AG04449 (cell line): ENCODE measurements at regions of chr11 and their contacts with region 1.

Region 1: GRCh38 chr11:17384002-17384511 is 4.4 kb downstream of the KCNJ11 start:
- DNase-seq: peak; percentile 26
- H3K4me3 ChIP-seq: no peak overlapping the region
- CTCF ChIP-seq: peak; percentile 87

Region 2: DNA sequence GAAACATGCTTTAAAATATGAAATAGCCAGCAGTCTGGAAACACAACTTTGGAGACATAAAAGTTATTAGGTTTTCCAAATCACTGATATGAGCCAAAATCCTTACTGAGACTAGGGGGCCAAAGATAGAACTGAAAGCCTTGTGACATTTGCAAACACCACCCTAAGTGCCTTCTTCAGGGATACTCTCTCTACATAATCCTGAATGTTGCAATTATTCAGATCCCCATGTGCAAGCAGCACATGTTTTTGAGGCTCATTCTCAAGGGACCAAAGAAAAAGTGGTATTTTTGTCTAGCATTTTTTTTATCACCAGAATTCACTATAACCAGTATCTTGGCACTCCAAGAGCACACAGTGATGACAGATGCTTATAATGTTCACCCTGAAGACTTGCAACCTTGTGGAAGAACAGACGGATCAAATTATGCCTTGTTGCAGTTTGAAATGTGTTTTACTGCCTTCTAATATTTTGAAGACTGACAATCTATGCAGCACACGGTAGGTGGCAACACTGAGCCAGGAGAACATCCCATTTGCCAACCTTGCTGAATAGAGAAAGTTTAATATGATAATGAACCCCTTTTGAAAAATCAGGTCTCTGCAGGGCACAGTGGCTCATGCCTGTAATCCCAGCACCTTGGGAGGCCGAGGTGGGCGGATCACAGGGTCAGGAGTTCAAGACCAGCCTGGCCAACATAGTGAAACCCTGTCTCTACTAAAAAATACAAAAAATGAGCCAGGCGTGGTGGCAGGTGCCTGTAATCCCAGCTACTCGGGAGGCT is 448.3 kb before region 1 on chr11:
- CTCF ChIA-PET with region 1: no interaction called
- POLR2A ChIA-PET with region 1: no interaction called
- DNase-seq: no peak
- H3K4me3 ChIP-seq: no peak overlapping the region
- CTCF ChIP-seq: peak; percentile 68

Region 3: DNA sequence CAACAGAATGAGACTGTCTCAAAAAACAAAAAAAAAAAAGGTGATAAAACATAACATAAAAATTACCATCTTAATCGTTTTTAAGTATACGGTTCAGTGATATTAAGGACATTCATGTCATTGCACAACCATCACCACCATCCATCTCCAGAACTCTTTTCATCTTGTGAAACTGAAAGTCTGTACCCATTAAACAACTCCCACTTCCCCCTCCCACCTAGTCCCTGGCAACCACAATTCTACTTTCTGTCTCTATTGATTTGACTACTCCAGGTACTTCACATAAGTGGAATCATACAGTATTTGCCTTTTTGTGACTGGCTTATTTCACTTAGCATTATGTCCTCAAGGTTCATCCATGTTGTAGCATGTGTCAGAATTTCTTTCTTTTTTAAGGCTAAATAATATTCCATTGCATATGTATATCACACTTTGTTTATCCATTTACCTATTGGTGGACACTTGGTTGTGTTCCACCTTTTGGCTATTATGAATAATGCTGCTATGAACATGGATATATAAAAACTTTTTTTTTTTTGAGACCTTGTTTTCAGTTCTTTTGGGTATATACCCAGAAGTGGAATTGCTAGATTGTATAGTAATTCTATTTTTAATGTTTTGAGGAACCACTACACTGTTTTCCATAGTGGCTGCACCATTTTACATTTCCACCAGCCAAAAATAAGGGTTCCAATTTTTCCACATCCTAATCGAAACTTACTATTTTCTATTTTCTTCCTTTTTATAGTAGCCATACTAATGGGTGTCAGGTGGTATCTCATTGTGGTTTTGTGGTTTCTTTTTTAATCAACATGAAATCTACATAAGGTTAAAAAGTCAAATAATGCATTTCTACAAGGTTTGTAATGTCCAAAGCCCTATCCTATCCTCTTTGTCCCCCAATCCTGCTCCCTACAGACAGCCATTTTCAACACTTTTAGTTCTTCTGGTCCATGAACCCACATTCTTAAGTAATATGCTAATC is 152.9 kb before region 1 on chr11:
- CTCF ChIA-PET with region 1: interaction called, 17 read pairs
- POLR2A ChIA-PET with region 1: no interaction called
- DNase-seq: no peak
- H3K4me3 ChIP-seq: no peak overlapping the region
- CTCF ChIP-seq: no peak

Region 4: DNA sequence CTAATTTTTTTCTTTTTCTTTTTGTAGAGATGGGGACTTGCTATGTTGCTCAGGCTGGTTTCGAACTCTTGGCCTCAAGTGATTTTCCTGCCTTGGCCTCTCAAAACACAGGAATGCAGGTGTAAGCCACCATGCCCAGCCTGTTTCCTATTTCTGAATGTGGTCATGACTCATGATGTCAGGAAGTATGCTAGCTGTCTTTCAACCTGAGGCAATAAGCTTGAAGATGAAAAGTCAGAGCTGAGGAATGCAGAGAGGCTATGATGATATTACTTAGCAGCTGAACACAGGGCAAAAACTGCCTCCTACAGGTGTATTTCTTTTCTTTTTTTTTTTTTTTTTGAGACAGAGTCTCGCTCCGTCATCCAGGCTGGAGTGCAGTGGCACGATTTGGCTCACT is 116.5 kb before region 1 on chr11:
- CTCF ChIA-PET with region 1: no interaction called
- POLR2A ChIA-PET with region 1: no interaction called
- DNase-seq: no peak
- H3K4me3 ChIP-seq: no peak overlapping the region
- CTCF ChIP-seq: no peak

Region 5: DNA sequence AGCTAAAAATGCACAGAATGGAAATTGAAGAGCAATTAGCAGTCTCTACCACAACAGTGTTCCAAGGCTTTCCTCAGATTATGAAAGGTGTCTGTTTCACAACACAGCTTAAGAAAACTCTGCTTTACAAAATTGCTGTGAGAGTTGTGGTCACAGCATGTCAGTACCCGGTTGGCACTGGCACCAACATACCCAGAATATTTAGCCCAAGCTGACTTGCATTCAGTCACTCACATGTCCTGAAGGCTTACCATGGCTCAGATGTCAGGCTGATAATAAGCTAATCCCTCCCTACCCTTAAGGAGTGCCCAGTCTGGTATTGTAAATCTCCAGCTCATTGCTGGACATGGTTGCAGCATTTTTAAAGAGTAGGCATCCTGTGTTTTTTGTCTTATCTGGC is 17.6 kb before region 1 on chr11:
- CTCF ChIA-PET with region 1: interaction called, 62 read pairs
- POLR2A ChIA-PET with region 1: interaction called, 3 read pairs
- DNase-seq: no peak
- H3K4me3 ChIP-seq: no peak overlapping the region
- CTCF ChIP-seq: no peak

Region 6: DNA sequence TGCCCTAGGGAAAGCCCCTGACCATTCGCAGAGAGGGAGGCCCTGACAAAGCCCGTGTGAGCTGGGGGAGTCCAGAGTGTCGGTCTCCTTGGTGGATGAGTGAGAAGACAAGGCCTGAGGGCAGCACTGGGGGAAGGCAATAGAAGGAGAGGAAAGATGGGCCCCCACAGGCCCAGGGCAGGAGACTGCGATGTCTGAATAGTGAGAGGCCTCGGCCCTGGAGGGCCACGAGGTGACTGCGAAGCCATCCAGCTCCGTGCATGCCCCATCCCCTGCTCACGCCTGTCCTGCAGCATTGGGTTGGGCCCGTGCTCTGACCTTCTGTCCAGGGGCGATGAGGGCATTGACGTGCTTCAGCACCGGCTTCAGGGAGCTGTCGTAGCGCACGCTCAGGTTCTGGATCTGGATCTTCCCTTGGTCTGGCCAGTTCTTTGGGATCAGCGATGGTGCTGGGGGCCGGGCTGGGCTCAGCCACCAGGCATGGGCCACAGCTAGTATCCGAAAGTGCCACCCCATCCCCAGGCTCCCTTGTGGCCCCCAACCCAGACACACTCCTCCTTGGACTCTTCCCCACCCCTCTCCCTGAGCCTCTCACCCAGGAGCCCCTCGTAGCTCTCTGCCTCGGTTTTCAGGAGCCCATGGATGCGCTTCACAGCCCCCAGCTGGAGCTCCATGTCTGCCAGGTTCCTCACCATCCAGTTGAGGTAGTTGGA is 12.7 kb after region 1 on chr11:
- CTCF ChIA-PET with region 1: interaction called, 20 read pairs
- POLR2A ChIA-PET with region 1: no interaction called
- DNase-seq: no peak
- H3K4me3 ChIP-seq: no peak overlapping the region
- CTCF ChIP-seq: no peak

Region 7: DNA sequence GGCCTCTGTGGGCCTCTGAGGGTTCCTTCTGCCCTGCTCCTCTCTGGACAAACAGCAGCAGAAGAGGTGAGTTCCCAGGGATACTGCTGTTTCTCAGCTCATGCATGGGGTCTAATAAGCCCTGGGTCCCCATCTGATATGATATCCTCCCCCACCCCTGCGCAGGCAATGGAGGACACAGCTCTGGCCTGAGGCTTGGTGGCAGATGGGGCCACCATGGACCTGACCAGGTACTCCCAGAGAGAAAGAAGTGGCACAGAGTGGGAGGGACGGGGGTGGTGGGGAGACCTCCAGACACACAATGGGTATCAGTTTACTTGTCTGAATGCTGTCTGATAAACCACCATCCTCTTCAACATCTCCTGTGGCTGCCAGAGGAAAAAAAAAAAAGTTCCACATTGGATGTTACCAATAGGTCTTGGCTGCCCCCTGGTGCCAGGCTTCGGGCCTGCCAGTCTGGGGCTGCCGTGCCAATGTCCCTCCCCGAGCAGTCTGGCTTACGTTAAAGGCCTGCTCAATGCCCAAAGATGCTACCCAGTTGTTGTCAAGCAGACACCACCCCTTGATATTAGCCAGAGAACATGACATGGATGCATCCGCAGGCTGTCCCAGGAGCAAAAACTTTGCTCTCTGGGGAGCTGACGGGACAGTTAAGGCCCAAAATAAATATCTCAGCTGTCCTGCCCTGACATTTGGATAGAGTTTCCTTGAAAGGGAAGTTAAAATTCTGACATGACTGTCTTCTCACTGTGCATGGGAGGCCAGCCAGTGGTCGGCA is 120.5 kb after region 1 on chr11:
- CTCF ChIA-PET with region 1: interaction called, 116 read pairs
- POLR2A ChIA-PET with region 1: no interaction called
- DNase-seq: no peak
- H3K4me3 ChIP-seq: no peak overlapping the region
- CTCF ChIP-seq: peak; percentile 87

Region 8: GRCh38 chr11:17593466-17594245 is 209.6 kb after region 1 on chr11:
- CTCF ChIA-PET with region 1: no interaction called
- POLR2A ChIA-PET with region 1: no interaction called
- DNase-seq: no peak
- H3K4me3 ChIP-seq: no peak overlapping the region
- CTCF ChIP-seq: no peak

Region 9: GRCh38 chr11:17760102-17761029 is 376.3 kb after region 1 on chr11:
- CTCF ChIA-PET with region 1: no interaction called
- POLR2A ChIA-PET with region 1: no interaction called
- DNase-seq: no peak
- H3K4me3 ChIP-seq: no peak overlapping the region
- CTCF ChIP-seq: peak; percentile 60